Mucosa of descending colon (tissue), 3 donors: ENCODE measurements at regions of chr2 and their contacts with region 1.

Region 1: DNA sequence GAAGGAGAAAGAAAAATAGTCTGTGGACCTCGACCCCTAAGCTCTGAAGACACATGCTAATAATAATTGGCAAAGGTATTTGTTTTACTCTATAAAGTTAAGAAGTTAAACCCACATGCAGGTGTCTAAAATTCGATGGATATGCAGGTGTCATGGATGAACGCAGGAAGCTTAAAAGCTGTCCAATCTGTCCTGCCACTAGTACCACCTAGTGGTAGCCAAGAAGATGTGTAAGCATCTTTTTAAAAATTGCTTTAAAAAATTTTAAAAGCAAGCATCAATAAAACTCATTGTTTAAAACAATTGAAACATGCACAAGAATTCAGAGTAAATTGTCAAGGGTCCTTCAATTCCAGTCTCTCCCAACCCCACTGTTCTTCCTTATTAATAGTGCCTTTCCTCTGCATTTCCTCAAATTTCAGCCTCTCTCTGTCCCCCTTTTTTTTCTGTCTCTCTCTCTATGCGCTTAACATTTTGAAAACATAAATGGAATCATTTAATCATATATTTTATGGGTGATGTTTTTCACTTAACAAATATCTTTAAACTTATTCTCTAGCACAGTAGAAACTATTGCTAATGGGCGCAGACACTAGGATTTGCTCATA is 30.6 kb upstream of the PPP3R1 start:
- DNase-seq: peak in 1 of 3 donors; percentile 6
- ATAC-seq: peak; percentile 69
- H3K4me3 ChIP-seq: no peak overlapping the region
- H3K4me1 ChIP-seq: no peaks in the 10 kb centered on the region
- CTCF ChIP-seq: peak; percentile 35

Region 2: DNA sequence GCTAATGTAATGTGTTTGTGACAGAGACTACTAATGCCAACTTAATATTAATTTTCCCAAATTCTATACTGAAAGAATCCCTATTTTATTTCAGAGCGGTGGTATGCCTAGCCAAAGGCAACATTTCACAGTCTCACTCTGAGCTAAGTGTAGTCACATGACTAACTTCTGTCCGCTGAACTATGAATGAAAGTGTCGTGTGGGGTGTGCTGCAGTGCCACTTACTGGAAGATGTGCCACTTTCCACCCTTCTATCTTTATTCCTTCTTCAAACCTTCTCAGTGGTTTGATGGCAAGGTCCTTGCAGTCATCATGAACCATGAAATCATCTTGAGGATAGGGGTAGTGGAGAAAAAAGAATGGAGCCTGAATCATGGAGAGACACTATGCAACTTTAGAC is 172.8 kb before region 1 on chr2:
- intact Hi-C with region 1: loop called in 1 of 2 experiments (anchors 10 kb)
- DNase-seq: no peak
- ATAC-seq: no peak
- H3K4me3 ChIP-seq: no peak overlapping the region
- H3K4me1 ChIP-seq: no peaks in the 10 kb centered on the region
- CTCF ChIP-seq: no peak

Region 3: DNA sequence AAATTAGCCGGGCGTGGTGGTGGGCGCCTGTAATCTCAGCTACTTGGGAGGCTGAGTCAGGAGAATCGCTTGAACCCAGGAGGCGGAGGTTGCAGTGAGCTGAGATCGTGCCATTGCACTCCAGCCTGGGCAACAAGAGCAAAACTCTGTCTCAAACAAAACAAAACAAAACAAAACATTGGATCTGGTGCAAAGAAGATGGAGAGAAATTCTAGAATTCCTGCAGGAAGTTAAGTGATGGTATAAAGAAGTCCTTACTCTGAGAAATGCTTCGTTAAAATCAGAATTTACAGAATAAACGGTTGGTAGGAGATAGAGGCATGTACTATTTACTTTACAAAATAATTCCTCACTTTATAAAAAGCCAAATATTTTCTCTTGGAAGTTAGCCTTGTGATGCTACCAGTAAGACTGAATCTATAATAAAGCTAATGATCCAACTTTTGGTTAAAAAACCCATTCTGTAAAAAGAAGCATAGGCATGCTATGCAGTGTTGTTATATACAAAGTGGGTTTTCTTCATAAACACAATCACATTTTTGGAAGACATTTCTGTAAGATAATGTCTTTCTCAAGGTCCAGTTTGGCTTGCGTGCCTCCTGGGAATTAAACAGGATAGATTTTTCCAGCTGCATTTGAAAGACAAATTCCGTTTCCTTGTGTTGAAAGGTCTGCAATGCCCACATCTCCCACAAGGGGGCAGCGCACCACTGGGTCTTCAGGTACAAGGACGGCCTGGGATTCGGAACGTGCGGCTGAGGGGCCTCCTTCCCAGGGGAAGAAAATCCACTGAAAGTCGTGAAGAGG is 160.8 kb before region 1 on chr2:
- intact Hi-C with region 1: loop called (anchors 5 to 10 kb)
- DNase-seq: peak; percentile 80 to 96 (median 89)
- ATAC-seq: peak; percentile 89
- H3K4me3 ChIP-seq: no peak overlapping the region
- H3K4me1 ChIP-seq: no peaks in the 10 kb centered on the region
- CTCF ChIP-seq: peak; percentile 96

Region 4: DNA sequence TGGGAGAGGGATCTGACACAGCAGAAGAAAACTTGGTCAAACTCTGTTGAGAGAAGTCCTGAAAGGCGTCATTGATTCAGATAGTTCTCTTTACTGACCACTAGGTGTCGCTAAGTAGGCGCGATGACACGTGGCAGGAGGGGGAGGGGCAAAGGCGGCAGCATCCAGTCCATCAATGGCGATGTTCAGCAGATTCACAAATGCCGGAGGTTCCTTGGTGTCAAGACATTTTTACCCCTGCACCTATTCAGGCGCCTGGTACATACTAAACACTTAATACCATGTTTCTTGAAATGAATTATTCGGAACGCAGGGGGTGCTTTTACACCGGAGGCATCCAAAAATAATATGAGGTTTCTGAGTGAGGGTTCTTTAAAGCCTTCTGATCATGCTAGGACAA is 79.2 kb after region 1 on chr2:
- intact Hi-C with region 1: no loop called
- DNase-seq: peak; percentile 71 to 86 (median 86)
- ATAC-seq: peak; percentile 94
- H3K4me3 ChIP-seq: no peak overlapping the region
- H3K4me1 ChIP-seq: no peaks in the 10 kb centered on the region
- CTCF ChIP-seq: peak; percentile 62